ENCODE measurements at regions of chr17 and their contacts with region 1.

Region 1: DNA sequence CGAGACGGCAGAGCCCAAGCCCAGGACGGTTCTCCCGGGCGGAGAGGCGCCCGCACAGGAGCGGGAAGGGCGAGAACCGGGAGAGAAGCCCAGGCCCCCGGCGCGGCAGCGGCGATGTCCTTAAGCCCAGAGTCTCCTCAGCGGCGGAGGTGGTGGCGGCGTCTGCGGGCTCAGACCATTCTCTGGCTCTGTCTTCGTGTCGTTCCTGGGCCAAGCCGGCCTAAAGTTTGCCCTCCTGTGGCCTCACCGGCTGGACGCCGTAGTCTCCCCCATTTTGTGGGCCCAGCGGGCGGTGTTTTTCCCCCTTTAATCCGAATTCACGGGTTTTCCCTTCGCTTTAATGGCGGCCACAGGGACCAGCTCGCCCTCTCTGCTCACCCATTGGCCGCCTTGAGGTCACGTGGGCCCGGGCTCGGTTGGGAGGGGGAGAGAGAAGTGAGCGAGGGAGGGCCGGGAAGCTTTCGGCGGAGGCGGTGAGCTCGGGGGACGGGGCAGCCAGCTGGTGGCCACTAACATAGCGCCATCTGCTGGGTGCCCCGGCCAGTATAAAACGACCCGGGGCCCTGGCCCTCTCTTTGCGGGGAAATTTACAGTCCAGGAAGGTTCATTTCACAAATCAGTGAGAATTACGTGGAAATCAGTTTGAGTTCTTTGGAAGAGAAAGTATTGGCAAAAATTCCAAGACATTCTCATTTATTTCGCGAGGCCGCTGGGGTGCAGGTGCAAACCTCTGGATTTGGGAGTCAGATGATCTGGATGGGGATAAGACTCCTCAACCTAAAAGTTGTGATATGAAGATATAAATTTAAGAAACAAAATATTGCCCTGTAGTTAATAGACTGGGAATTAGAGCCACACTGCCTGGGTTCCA is 755 bp upstream of the MED13 start:
- DNase-seq: peak; percentile 99 to 100 (median 99)
- ATAC-seq: peak; percentile 99 to 100 (median 100)
- H3K4me3 ChIP-seq: peak overlapping the region; percentile 79 to 98 (median 95)
- H3K27ac ChIP-seq: peak overlapping the region; percentile 93 to 100 (median 99)
- H3K4me1 ChIP-seq: peaks cover 9 to 36% (median 24%) of the 10 kb centered on the region in 12 donors
- H3K27me3 ChIP-seq: no peaks in the 10 kb centered on the region
- CTCF ChIP-seq: peak; percentile 87 to 98 (median 92)
- POLR2A ChIP-seq: peak; percentile 27 to 80

Region 2: DNA sequence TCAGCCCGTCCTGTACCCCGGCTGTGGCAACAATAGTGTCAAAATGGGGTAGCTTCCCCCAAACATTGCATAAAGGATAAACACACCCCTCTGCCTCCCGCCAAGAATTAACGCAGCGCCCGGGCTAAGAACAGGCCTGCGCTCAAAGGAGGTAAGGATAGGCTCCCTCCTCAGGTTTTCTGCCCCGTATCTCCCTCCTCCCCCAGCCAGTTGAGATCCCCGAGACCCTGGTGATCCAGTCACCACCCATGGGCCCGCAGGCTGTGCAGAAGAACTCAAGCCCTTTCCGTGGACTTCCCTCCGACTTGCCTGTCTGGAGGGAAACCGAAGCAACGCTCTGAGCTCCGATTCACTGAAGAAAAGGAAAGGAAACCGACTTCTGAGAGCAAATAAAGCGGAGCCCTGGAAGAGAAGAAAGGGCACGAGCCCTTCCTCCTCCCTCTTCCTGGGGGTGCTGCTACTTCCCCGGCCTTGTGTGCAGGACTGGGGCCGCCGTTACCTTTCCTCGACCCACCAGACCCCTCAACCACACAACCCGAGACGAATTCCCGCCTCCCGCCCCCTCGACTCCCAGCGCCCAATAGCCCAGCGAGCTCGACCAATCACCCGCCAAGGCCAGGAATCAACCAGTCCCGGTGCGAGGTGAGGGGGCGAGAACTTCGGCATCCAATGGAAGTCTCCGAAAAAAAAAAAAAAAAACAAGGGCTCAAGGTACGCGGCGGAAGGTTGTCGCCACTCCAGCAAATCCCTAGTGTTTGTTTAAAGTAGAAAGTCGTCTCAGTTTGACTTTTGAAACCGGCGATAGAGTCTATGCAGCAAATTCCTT is 202.6 kb before region 1 on chr17 and contains the start of gene BRIP1:
- intact Hi-C with region 1: loop called in 1 of 10 experiments (anchors 5 kb)
- DNase-seq: peak; percentile 90 to 94 (median 92)
- ATAC-seq: peak; percentile 98 to 100 (median 100)
- H3K4me3 ChIP-seq: peak within 1 kb of the TSS; percentile 55 to 83 (median 70)
- H3K27ac ChIP-seq: peak within 1 kb of the TSS in 11 of 12 donors; percentile 49 to 82 (median 68)
- H3K4me1 ChIP-seq: peaks cover 0 to 15% (median 3%) of the 10 kb centered on the region in 12 donors
- H3K27me3 ChIP-seq: no peaks in the 10 kb centered on the region
- CTCF ChIP-seq: no peak
- POLR2A ChIP-seq: no peak
- total RNA-seq, gene BRIP1: 0.09 to 2.2 (median 0.21) TPM in 6 of 9 donors, not detected in the others

Region 3: GRCh38 chr17:62109378-62109902 is 43.6 kb after region 1 on chr17:
- intact Hi-C with region 1: no loop called
- DNase-seq: no peak
- ATAC-seq: peak in 3 of 4 donors; percentile 41 to 60 (median 52)
- H3K4me3 ChIP-seq: no peak overlapping the region
- H3K27ac ChIP-seq: no peak overlapping the region
- H3K4me1 ChIP-seq: no peaks in the 10 kb centered on the region
- H3K27me3 ChIP-seq: peaks cover 0 to 17% (median 0%) of the 10 kb centered on the region in 9 donors
- CTCF ChIP-seq: peak in 5 of 12 donors; percentile 8 to 33 (median 28)
- POLR2A ChIP-seq: no peak

Region 4: DNA sequence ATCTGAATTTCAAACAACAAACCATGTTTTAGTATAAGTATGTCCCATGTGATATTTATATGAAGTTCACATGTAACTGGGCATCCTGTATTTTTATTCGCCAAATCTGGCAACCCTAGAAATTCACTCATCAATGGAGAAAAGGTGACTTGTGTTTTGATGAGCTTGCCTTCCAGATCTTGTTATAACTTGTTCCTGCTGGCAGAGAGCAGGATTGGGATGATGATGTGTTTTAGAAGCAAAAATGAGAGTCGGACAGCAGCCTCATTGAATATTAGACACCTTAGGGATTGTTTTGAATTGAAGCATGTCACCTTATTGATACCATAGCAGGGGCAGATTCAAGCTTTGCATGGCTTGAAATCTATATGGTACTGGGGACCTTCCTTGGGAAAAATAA is 84.6 kb after region 1 on chr17:
- intact Hi-C with region 1: no loop called
- DNase-seq: no peak
- ATAC-seq: no peak
- H3K4me3 ChIP-seq: no peak overlapping the region
- H3K27ac ChIP-seq: no peak overlapping the region
- H3K4me1 ChIP-seq: no peaks in the 10 kb centered on the region
- H3K27me3 ChIP-seq: peaks cover 0 to 15% (median 0%) of the 10 kb centered on the region in 9 donors
- CTCF ChIP-seq: no peak
- POLR2A ChIP-seq: no peak